Stomach (tissue), 19 donors: ENCODE measurements at regions of chr17 and their contacts with region 1.

Region 1: DNA sequence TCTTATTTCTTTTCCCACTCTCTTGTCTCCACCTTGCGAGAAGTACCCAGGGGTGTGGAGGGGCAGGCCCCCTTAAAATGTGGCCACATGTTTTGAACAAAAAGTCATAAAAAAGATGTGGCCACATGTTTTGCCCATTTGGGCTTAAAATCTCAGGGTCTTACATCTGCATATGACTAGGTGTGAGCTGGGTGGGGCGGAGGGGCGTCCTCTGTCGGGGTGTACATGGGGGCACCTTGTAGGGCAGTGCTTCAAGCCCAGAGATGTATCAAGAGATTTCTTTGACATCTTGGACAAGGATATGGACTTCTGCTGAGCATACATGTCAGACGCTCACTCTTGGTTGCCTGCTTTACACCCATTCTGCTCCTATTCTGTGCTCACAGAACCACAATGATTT is 13.0 kb upstream of the SLC47A1 start:
- DNase-seq: no peak
- H3K4me3 ChIP-seq: no peak overlapping the region
- H3K27ac ChIP-seq: no peak overlapping the region
- H3K4me1 ChIP-seq: no peaks in the 10 kb centered on the region
- H3K27me3 ChIP-seq: no peaks in the 10 kb centered on the region
- CTCF ChIP-seq: no peak
- EP300 ChIP-seq: no peak
- POLR2A ChIP-seq: no peak

Region 2: GRCh38 chr17:19630661-19631060 is 110.0 kb after region 1 on chr17:
- intact Hi-C with region 1: loop called (anchors 10 kb)
- DNase-seq: no peak
- H3K4me3 ChIP-seq: no peak overlapping the region
- H3K27ac ChIP-seq: no peak overlapping the region
- H3K4me1 ChIP-seq: no peaks in the 10 kb centered on the region
- H3K27me3 ChIP-seq: no peaks in the 10 kb centered on the region
- CTCF ChIP-seq: no peak
- EP300 ChIP-seq: no peak
- POLR2A ChIP-seq: no peak